Endothelial cell of umbilical vein (primary cell): ENCODE measurements at regions of chr17 and their contacts with region 1.

Region 1: DNA sequence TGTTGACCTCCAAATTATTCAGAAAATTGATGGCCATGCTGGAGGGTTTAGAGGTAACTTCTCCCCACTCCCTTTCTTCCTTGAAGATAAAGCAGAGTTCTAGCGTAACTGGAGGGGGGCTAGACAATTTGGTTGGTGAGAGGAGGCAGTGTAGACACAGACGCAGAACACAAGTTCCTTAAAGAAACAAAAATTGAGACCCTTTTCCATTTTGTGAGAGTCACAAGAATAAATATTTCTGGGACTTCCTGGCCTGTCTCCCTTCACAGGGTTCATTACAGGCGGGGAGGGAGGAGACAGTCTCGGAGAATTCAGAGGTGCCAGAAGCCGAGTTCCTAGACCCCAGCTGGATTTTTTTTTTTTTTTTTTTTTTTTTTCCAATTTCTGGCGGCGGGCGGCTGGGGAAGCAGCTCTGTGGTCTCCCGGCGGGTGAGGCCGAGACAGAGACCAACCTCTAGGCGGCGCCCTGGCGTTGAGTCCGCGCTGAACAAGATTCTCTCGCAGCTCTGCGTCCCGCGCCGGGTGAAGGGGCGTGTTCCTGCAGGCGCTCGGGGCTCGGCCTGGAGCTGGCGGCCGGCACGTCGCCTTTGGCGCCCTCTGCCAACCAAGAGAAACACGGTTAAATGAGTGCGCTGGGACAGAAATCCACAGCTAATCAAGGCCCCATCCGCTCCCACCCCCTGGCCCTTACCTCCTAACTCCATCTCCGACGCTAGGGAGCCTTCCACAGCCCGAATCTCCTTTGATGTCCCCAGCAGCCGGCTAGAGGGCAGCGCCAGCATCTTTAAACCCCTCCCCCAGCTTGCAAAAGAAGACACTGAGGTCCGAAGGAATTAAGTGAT is 10.2 kb upstream of the HOXB9 start:
- DNase-seq: peak; percentile 93
- H3K4me3 ChIP-seq: no peak overlapping the region
- H3K27ac ChIP-seq: no peak overlapping the region
- H3K4me1 ChIP-seq: no peaks in the 10 kb centered on the region
- H3K27me3 ChIP-seq: peaks cover 69 to 85% of the 10 kb centered on the region in 2 experiments
- CTCF ChIP-seq: peak; percentile 89 to 96
- POLR2A ChIP-seq: no peak

Region 2: DNA sequence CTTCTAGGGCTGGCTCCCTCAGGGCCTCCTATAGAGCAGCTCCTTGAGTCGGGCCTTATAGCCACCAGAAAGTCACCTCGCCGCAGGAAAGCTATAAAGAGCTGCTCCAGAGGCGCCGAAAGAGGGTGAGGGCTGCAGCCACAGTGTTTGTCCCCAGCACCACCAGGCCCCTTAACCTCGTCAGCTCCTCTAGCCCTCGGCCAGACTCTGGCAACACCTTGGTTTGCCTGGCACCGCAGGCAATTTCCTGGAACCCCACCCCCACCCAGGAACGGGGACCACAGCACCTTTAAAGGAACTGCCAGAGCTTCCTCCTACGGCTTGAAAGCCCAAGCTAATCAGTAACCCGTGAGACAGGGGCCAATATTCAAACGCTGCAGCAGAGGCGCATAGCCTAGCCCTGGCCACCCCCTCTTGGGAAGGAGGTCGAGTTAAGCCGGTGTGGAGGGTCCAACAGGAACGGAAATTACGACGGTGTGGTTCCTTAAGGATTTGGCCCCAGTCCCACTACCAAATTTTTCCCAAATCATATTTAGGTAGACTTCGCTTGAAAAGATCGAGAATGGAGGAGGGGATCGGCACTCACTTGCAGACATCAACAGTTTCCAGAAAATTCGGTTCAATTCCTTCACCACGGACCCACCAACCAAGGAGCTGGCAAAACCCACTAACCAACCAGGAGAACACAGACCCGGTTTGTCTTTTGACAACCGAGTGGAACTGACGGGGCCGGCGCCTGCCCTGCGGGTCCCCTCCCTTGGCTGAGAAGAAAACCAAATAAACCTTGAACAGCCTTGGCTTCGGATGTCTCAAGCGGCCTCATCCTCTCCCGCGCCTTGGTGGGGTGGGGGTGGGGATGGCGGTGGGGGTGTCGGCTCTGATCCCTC is 34.6 kb before region 1 on chr17:
- CTCF ChIA-PET with region 1: no interaction called
- POLR2A ChIA-PET with region 1: no interaction called
- dilution Hi-C with region 1: no loop called
- intact Hi-C with region 1: no loop called
- DNase-seq: no peak
- H3K4me3 ChIP-seq: peak overlapping the region in 2 of 3 experiments; percentile 27 to 47
- H3K27ac ChIP-seq: no peak overlapping the region
- H3K4me1 ChIP-seq: peaks cover 39% of the 10 kb centered on the region
- H3K27me3 ChIP-seq: no peaks in the 10 kb centered on the region
- CTCF ChIP-seq: no peak
- POLR2A ChIP-seq: no peak

Region 3: GRCh38 chr17:48618256-48618897 is 18.0 kb before region 1 on chr17:
- CTCF ChIA-PET with region 1: interaction called, 45 read pairs
- POLR2A ChIA-PET with region 1: no interaction called
- dilution Hi-C with region 1: no loop called
- intact Hi-C with region 1: no loop called
- DNase-seq: peak; percentile 83
- H3K4me3 ChIP-seq: peak overlapping the region; percentile 3 to 46 (median 30)
- H3K27ac ChIP-seq: no peak overlapping the region
- H3K4me1 ChIP-seq: peaks cover 27% of the 10 kb centered on the region
- H3K27me3 ChIP-seq: peaks cover 66 to 79% of the 10 kb centered on the region in 2 experiments
- CTCF ChIP-seq: peak; percentile 91 to 99
- POLR2A ChIP-seq: no peak

Region 4: DNA sequence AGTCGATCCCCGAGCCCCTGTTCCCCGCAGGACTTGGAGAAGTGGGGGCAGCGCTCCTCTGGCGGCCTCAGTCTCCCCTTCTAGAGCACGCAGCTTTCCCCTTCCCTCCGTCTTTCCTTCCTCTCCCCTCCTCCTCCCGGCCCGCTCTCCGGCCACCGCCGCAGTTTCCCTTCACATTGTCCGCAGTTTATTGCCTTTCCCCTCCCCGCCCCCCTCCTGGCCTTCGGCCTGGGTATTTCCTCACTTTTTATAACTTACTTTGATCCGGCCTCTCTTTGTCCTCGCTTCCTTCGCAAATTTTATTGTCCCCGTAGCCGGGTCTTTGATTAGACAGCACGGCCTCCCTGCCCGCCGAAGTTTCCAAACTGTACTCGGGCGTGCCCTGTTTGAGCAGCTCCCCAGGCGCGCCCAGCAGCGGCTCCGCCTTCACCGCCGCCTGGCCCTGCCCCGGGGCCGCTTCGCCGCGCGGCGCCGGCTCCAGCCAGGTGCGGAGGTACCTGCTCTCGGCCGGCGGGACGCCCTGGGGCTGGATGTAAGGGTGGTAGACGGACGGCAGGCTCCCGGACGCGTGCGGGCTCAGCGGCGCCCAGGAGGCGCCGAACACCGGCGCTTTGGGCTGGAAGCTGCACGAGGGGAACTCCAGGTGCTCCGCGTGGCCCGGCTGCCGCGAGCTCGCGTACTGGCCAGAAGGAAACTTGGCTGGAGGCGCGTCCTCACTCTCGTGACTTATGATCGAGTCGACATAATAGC is 10.7 kb before region 1 on chr17:
- CTCF ChIA-PET with region 1: interaction called, 73 read pairs
- POLR2A ChIA-PET with region 1: no interaction called
- dilution Hi-C with region 1: no loop called
- intact Hi-C with region 1: loop called (anchors 1 kb)
- DNase-seq: peak; percentile 35
- H3K4me3 ChIP-seq: peak overlapping the region; percentile 40 to 66 (median 64)
- H3K27ac ChIP-seq: no peak overlapping the region
- H3K4me1 ChIP-seq: peaks cover 13% of the 10 kb centered on the region
- H3K27me3 ChIP-seq: peaks cover 70 to 96% of the 10 kb centered on the region in 2 experiments
- CTCF ChIP-seq: no peak
- POLR2A ChIP-seq: no peak

Region 5: DNA sequence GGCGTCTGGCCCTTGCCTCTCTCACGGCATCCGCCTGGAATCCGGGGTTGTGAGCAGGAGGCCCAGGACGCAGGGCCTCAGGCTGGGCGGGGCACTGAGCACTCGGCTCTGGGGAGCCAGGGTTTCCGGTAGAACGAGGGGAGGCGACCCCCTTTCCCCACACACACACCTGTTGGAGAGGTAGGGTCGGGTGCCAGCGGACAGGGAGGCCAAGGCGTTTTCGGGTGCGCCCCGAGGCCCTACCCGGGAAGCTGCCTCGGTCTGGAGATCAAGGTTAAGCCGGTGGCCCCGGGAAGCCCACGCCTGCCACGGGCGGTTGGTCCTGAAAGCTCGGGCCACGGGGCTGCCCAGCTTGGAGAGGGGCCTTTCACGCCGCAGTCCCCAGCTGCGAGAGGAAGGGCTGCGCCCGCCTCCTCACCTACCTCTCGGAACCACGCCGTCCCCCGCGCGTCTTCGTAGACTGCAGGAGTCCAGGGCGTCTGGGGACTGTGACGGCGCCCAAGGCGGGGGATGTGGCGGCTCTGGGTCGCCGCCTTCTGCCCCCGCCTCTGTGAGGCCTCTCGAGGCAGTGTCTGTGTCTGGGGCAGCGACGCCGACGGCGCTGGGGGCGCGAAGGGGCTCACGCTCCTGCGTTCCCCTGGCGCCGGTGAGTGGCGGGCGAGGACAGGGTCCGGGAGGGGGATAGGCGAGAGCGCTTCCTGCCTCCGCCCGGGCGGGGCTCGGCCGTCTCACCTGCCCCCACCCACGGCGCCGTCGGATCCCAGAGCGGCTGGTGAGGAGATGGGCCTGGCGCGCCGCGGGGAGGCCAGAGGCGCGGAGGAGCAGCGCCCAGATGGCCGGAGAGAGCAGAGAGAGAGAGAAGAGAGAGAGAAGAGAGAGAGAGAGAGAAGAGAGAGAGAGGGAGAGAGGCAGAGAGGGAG is 10.0 kb after region 1 on chr17:
- CTCF ChIA-PET with region 1: interaction called, 23 read pairs
- POLR2A ChIA-PET with region 1: no interaction called
- dilution Hi-C with region 1: no loop called
- intact Hi-C with region 1: no loop called
- DNase-seq: no peak
- H3K4me3 ChIP-seq: no peak overlapping the region
- H3K27ac ChIP-seq: no peak overlapping the region
- H3K4me1 ChIP-seq: no peaks in the 10 kb centered on the region
- H3K27me3 ChIP-seq: peaks cover 62 to 70% of the 10 kb centered on the region in 2 experiments
- CTCF ChIP-seq: no peak
- POLR2A ChIP-seq: no peak

Region 6: GRCh38 chr17:48663134-48663924 is 26.9 kb after region 1 on chr17:
- CTCF ChIA-PET with region 1: interaction called, 12 read pairs
- POLR2A ChIA-PET with region 1: no interaction called
- dilution Hi-C with region 1: no loop called
- intact Hi-C with region 1: no loop called
- DNase-seq: no peak
- H3K4me3 ChIP-seq: no peak overlapping the region
- H3K27ac ChIP-seq: no peak overlapping the region
- H3K4me1 ChIP-seq: no peaks in the 10 kb centered on the region
- H3K27me3 ChIP-seq: peaks cover 11 to 23% of the 10 kb centered on the region in 2 experiments
- CTCF ChIP-seq: no peak
- POLR2A ChIP-seq: no peak

Region 7: GRCh38 chr17:48671697-48672171 is 35.3 kb after region 1 on chr17:
- CTCF ChIA-PET with region 1: interaction called, 13 read pairs
- POLR2A ChIA-PET with region 1: no interaction called
- dilution Hi-C with region 1: no loop called
- intact Hi-C with region 1: no loop called
- DNase-seq: peak; percentile 77
- H3K4me3 ChIP-seq: peak overlapping the region in 1 of 3 experiments; percentile 43
- H3K27ac ChIP-seq: no peak overlapping the region
- H3K4me1 ChIP-seq: no peaks in the 10 kb centered on the region
- H3K27me3 ChIP-seq: peaks cover 12 to 21% of the 10 kb centered on the region in 2 experiments
- CTCF ChIP-seq: peak; percentile 79 to 88
- POLR2A ChIP-seq: no peak